GM12878 (cell line): ENCODE measurements at regions of chr6 and their contacts with region 1.

Region 1: GRCh38 chr6:26312501-26313390 is 52.3 kb upstream of the BTN3A2 start:
- DNase-seq: no peak
- ATAC-seq: peak; percentile 72
- H3K4me3 ChIP-seq: peak overlapping the region; percentile 80
- H3K27ac ChIP-seq: peak overlapping the region; percentile 66
- H3K4me1 ChIP-seq: peaks cover 14% of the 10 kb centered on the region
- H3K27me3 ChIP-seq: no peaks in the 10 kb centered on the region
- CTCF ChIP-seq: no peak
- EP300 ChIP-seq: peak in 1 of 2 experiments; percentile 61; a peak in 1 of 4 replicates
- POLR2A ChIP-seq: no peak
- RAD21 ChIP-seq: no peak

Region 2: DNA sequence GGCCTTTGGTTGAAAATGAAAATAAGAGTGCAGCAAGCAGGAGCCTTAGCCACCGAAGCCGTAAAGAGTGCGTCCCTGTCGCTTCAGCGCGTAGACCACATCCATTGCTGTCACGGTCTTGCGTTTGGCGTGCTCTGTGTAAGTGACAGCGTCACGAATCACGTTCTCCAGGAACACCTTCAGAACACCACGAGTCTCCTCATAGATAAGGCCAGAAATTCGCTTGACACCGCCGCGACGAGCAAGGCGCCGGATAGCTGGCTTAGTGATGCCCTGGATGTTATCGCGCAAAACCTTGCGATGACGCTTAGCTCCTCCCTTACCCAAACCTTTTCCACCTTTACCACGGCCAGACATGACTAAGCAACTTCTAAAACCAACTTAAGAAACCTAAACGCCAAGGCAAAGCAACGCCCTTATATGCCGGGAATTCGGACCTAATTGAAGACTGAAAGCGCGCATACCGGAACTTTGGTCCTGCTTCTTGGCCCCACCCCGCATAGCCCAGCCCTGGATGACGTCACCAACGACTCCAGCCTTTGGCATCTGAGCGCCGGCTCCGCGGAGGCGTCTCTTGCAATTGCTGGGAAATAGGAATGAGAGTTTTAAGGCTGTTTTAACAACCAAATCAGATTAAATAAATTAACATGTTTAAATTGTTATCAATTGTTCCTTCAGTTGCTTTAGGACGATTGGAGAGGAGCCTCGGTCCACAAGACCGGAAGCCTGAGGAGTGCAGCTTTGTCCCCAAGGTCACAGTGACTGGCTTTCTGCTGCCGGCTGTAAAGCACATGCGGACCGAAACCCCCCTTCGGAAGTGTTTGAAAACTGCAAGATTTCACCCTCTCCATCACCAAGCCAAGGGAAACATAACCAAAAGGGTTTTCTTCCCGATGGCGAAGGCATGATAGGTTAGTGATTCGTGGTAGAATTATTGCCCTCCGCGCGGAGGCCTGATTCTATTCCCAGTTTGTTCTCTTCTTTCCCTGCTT is 27.3 kb before region 1 on chr6:
- CTCF ChIA-PET with region 1: interaction called, 11 read pairs
- POLR2A ChIA-PET with region 1: interaction called, 6 read pairs
- RAD21 ChIA-PET with region 1: interaction called, 11 read pairs
- SMC1A ChIA-PET with region 1: interaction called, 17 read pairs
- in situ Hi-C with region 1: no loop called
- intact Hi-C with region 1: loop called (anchors 2 kb)
- DNase-seq: peak; percentile 100
- ATAC-seq: peak; percentile 84
- H3K4me3 ChIP-seq: peak overlapping the region; percentile 75
- H3K27ac ChIP-seq: peak overlapping the region; percentile 97
- H3K4me1 ChIP-seq: no peaks in the 10 kb centered on the region; the same call in 1 of the 2 replicates
- H3K27me3 ChIP-seq: no peaks in the 10 kb centered on the region
- CTCF ChIP-seq: no peak
- EP300 ChIP-seq: peak in 1 of 2 experiments; percentile 72; a peak in 3 of 4 replicates
- POLR2A ChIP-seq: peak; percentile 95
- RAD21 ChIP-seq: no peak

Region 3: GRCh38 chr6:26329763-26330511 is 17.2 kb after region 1 on chr6:
- CTCF ChIA-PET with region 1: interaction called, 13 read pairs
- POLR2A ChIA-PET with region 1: interaction called, 7 read pairs
- RAD21 ChIA-PET with region 1: interaction called, 7 read pairs
- SMC1A ChIA-PET with region 1: interaction called, 22 read pairs
- in situ Hi-C with region 1: no loop called
- intact Hi-C with region 1: loop called (anchors 1 kb)
- DNase-seq: no peak
- ATAC-seq: peak; percentile 54
- H3K4me3 ChIP-seq: peak overlapping the region; percentile 83
- H3K27ac ChIP-seq: no peak overlapping the region
- H3K4me1 ChIP-seq: no peaks in the 10 kb centered on the region
- H3K27me3 ChIP-seq: no peaks in the 10 kb centered on the region
- CTCF ChIP-seq: no peak
- EP300 ChIP-seq: peak in 1 of 2 experiments; percentile 57; a peak in 1 of 4 replicates
- POLR2A ChIP-seq: no peak
- RAD21 ChIP-seq: no peak

Region 4: DNA sequence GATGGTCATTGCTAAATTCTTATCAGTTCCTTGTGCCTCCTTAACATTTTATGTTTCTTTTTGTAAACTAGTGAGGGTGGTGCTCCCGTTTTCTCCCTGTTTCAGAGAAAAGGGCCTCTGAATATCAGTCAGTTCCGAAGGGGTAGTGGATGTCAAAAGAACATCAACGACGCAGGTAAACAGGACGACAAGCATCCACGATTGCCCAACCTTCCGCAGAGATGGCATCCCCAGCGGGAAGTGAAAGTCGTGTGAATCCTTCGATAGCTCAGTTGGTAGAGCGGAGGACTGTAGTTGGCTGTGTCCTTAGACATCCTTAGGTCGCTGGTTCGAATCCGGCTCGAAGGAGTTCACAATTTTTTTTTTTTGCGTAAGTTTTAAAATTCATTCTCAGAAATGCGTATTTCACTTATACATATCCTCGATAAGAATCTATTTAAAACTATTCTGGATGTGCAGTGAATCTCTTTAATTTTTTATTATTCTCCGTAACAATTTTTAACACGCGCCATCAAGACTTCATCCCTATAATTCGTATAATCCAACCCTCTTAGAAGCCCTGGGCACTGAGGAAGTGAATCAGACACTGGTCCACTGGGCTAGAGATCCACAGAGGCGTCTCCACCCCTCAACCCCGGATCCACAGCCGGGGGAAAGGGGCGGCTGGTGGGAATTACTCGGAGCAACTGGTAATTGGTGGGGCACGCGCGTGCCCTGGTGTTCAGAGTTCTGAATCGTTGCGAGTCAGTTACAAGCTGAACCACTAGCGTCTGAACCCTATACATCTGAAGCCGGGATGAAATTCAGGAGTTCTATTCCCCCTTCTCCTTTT is 256.1 kb after region 1 on chr6:
- CTCF ChIA-PET with region 1: interaction called, 8 read pairs
- POLR2A ChIA-PET with region 1: no interaction called
- RAD21 ChIA-PET with region 1: interaction called, 4 read pairs
- SMC1A ChIA-PET with region 1: interaction called, 4 read pairs
- in situ Hi-C with region 1: no loop called
- intact Hi-C with region 1: loop called (anchors 1 kb)
- DNase-seq: peak; percentile 100
- ATAC-seq: peak; percentile 76
- H3K4me3 ChIP-seq: peak overlapping the region; percentile 81
- H3K27ac ChIP-seq: no peak overlapping the region
- H3K4me1 ChIP-seq: peaks cover 13% of the 10 kb centered on the region
- H3K27me3 ChIP-seq: no peaks in the 10 kb centered on the region
- CTCF ChIP-seq: peak; percentile 52 to 79 (median 52); a peak in 5 of 6 replicates
- EP300 ChIP-seq: peak in 1 of 2 experiments; percentile 48; a peak in 1 of 4 replicates
- POLR2A ChIP-seq: no peak
- RAD21 ChIP-seq: peak; percentile 55